IMR-90 (cell line): ENCODE measurements at regions of chr4 and their contacts with region 1.

Region 1: DNA sequence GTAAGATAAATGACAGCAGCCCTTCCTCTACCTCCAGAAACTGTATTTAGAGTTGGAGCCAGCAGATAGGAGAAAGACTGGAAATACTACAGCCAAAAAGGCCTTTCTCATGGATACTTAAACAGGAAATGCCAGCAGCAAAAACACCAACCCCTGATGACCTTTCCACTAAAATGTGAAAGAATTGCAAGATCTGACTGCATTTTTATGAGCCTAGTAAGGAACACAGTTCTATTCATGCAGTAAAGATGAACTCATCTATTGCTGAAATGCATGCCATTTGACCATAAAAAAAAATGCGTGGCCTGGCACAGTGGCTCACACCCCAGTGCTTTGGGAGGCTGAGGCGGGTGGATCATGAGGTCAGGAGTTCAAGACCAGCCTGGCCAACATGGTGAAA is 19.9 kb downstream of the ABCG2 start:
- DNase-seq: peak; percentile 91
- ATAC-seq: peak; percentile 78
- H3K4me3 ChIP-seq: no peak overlapping the region
- H3K27ac ChIP-seq: peak overlapping the region; percentile 8; the same call in 1 of the 2 replicates
- H3K4me1 ChIP-seq: peaks cover 12% of the 10 kb centered on the region
- H3K27me3 ChIP-seq: no peaks in the 10 kb centered on the region
- CTCF ChIP-seq: no peak
- POLR2A ChIP-seq: no peak
- RAD21 ChIP-seq: no peak

Region 2: GRCh38 chr4:87633243-87633642 is 505.3 kb before region 1 on chr4:
- CTCF ChIA-PET with region 1: no interaction called
- POLR2A ChIA-PET with region 1: no interaction called
- dilution Hi-C with region 1: no loop called
- in situ Hi-C with region 1: no loop called
- intact Hi-C with region 1: no loop called
- DNase-seq: peak; percentile 3
- ATAC-seq: no peak
- H3K4me3 ChIP-seq: no peak overlapping the region
- H3K27ac ChIP-seq: no peak overlapping the region
- H3K4me1 ChIP-seq: no peaks in the 10 kb centered on the region
- H3K27me3 ChIP-seq: no peaks in the 10 kb centered on the region
- CTCF ChIP-seq: no peak
- POLR2A ChIP-seq: no peak
- RAD21 ChIP-seq: no peak

Region 3: GRCh38 chr4:88185906-88186305 is 47.3 kb after region 1 on chr4:
- CTCF ChIA-PET with region 1: no interaction called
- POLR2A ChIA-PET with region 1: no interaction called
- dilution Hi-C with region 1: no loop called
- in situ Hi-C with region 1: no loop called
- intact Hi-C with region 1: loop called (anchors 5 kb)
- DNase-seq: peak; percentile 90
- ATAC-seq: peak; percentile 89
- H3K4me3 ChIP-seq: no peak overlapping the region
- H3K27ac ChIP-seq: no peak overlapping the region
- H3K4me1 ChIP-seq: no peaks in the 10 kb centered on the region
- H3K27me3 ChIP-seq: no peaks in the 10 kb centered on the region
- CTCF ChIP-seq: no peak
- POLR2A ChIP-seq: no peak
- RAD21 ChIP-seq: no peak